ENCODE measurements at regions of chr2 and their contacts with region 1.

Region 1: DNA sequence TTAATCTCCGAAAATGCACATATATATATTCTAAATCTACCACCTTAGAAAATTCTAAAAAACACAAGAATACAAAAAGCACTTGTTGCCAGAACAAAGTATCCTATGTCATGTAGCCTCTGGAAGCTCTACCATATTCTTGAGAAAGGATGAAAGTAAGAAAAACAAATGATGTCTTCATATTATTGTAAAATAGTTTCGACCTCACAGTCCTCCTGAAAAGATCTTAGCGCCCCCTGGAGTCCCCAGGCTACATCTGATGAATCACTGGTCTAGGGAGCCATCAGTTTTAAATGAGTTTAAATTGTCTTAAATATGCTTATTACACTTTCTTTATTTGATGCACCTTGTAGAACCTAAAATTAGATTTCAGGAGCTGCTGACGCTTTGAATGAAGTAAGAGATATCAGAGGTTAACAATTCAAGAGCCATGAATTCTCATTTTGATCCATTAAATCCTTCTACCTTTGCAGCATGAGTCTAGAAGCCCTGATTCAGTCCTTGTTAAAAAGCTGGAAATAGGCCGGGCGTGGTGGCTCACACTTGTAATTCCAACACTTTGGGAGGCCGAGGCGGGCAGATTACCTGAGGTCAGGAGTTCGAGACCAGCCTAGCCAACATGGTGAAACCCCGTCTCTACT is 138.8 kb downstream of the MCFD2 start:
- DNase-seq: no peak
- ATAC-seq: no peak

Region 2: GRCh38 chr2:46487667-46488333 is 289.0 kb before region 1 on chr2:
- intact Hi-C with region 1: no loop called
- DNase-seq: peak; percentile 87
- ATAC-seq: peak; percentile 90

Region 3: GRCh38 chr2:46699934-46700256 is 76.9 kb before region 1 on chr2:
- intact Hi-C with region 1: loop called (anchors 10 kb)
- DNase-seq: no peak
- ATAC-seq: no peak

Region 4: GRCh38 chr2:46737577-46737976 is 39.2 kb before region 1 on chr2:
- intact Hi-C with region 1: no loop called
- DNase-seq: no peak
- ATAC-seq: no peak

Region 5: GRCh38 chr2:46818121-46818888 is 41.5 kb after region 1 on chr2:
- intact Hi-C with region 1: loop called (anchors 2 kb)
- DNase-seq: peak; percentile 92
- ATAC-seq: peak; percentile 92

Region 6: GRCh38 chr2:47688561-47688960 is 911.8 kb after region 1 on chr2:
- intact Hi-C with region 1: no loop called
- DNase-seq: no peak
- ATAC-seq: no peak

Measured in Right ventricle myocardium inferior (tissue), 1 donor.